ENCODE measurements at regions of chr2 and their contacts with region 1.

Region 1: GRCh38 chr2:55961318-55961911 is 37.8 kb upstream of the EFEMP1 start:
- DNase-seq: no peak
- ATAC-seq: peak in 1 of 2 donors; percentile 44
- H3K4me3 ChIP-seq: no peak overlapping the region
- H3K27ac ChIP-seq: no peak overlapping the region
- H3K4me1 ChIP-seq: no peaks in the 10 kb centered on the region
- H3K27me3 ChIP-seq: no peaks in the 10 kb centered on the region

Region 2: DNA sequence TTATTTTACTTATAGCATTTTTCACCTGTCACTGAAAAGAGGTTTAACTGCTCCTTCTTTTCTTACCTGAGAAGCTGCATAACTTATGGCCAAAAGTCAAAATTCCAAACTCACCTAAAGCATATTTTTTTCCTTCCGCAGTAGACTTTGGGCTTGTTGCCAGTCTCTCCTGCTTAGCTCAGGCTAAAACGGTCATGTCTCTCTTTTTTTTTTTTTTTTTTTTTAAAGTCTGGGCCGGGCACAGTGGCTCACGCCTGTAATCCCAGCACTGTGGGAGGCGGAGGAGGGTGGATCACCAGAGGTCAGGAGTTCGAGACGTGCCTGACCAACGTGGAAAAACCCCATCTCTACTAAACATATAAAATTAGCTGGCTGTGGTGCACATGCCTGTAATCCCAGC is 1024.6 kb before region 1 on chr2:
- intact Hi-C with region 1: no loop called
- DNase-seq: no peak
- ATAC-seq: no peak
- H3K4me3 ChIP-seq: no peak overlapping the region
- H3K27ac ChIP-seq: no peak overlapping the region
- H3K4me1 ChIP-seq: no peaks in the 10 kb centered on the region
- H3K27me3 ChIP-seq: no peaks in the 10 kb centered on the region

Region 3: GRCh38 chr2:55761526-55761925 is 199.9 kb before region 1 on chr2:
- intact Hi-C with region 1: loop called in 3 of 4 experiments (anchors 5 to 10 kb)
- DNase-seq: no peak
- ATAC-seq: peak in 1 of 2 donors; percentile 63
- H3K4me3 ChIP-seq: no peak overlapping the region
- H3K27ac ChIP-seq: no peak overlapping the region
- H3K4me1 ChIP-seq: no peaks in the 10 kb centered on the region
- H3K27me3 ChIP-seq: no peaks in the 10 kb centered on the region

Region 4: DNA sequence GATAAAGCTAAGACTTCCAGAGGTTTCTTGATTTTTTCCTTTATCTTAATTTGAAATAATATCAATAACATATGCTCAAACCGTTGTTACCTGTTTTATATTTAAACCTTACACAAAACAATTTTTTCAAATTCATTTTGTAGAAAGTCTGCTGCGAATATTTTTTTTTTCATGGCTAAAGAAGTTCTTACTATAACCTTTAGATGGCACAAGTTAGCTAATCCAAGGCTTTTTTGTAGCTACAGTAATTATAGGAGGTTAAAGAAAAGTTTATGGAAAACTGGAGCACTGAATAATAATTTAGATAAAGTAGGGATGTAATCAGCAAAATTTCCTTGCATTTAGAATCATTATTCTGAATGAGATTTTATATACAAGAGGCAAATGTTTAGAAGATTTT is 189.8 kb before region 1 on chr2:
- intact Hi-C with region 1: loop called (anchors 5 to 10 kb)
- DNase-seq: no peak
- ATAC-seq: no peak
- H3K4me3 ChIP-seq: no peak overlapping the region
- H3K27ac ChIP-seq: no peak overlapping the region
- H3K4me1 ChIP-seq: no peaks in the 10 kb centered on the region
- H3K27me3 ChIP-seq: no peaks in the 10 kb centered on the region

Region 5: GRCh38 chr2:55811048-55811447 is 150.4 kb before region 1 on chr2:
- intact Hi-C with region 1: no loop called
- DNase-seq: no peak
- ATAC-seq: no peak
- H3K4me3 ChIP-seq: no peak overlapping the region
- H3K27ac ChIP-seq: no peak overlapping the region
- H3K4me1 ChIP-seq: peaks cover 4% of the 10 kb centered on the region
- H3K27me3 ChIP-seq: no peaks in the 10 kb centered on the region

Region 6: DNA sequence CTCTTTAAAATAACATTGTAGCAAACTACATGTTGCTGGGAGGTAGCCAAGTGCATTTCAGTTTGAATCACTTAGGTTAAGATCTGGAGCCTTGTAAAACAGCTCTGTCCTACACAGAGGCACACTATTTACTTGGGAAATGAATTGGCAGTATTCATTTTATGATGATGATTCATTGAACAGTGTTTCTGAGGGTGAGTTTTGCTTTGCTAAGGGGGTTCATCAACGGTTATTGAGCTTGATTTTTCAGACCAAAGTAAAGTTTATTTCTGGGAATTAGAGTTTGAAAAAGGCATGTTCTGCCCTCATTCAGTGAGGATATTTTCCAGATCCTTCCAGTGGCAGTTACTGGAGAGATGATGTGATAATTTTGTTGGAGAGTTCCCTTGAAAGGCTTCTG is 278.0 kb after region 1 on chr2:
- intact Hi-C with region 1: no loop called
- DNase-seq: no peak
- ATAC-seq: no peak
- H3K4me3 ChIP-seq: no peak overlapping the region
- H3K27ac ChIP-seq: no peak overlapping the region
- H3K4me1 ChIP-seq: no peaks in the 10 kb centered on the region
- H3K27me3 ChIP-seq: no peaks in the 10 kb centered on the region

Region 7: DNA sequence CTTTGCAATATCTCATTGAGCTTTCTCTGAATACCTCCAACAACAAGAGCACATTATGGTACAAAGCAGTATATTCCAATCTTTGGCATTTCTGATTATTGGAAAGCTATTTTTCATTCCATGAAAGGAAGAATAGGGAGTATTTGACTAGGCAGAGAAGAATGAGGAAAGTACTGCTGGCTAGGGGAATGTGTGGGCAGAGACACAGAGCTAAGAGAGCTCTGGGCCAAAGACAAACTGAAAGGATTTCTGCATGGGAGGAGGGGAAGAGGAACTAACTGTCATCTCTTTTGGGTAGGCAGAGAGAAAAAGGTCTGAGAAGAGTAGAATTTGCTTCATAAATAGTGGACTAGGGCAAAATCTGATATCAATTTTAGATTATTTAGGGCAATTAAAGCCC is 373.2 kb after region 1 on chr2:
- intact Hi-C with region 1: no loop called
- DNase-seq: no peak
- ATAC-seq: peak in 1 of 2 donors; percentile 78
- H3K4me3 ChIP-seq: no peak overlapping the region
- H3K27ac ChIP-seq: no peak overlapping the region
- H3K4me1 ChIP-seq: peaks cover 5% of the 10 kb centered on the region
- H3K27me3 ChIP-seq: no peaks in the 10 kb centered on the region

Measured in right cardiac atrium (tissue), 5 donors.